Activated CD4-positive, alpha-beta T cell treated with anti-CD3 and anti-CD28 coated beads for 36 hours (primary cell): ENCODE measurements at regions of chr14 and their contacts with region 1.

Region 1: GRCh38 chr14:106872611-106873446 is 1346.4 kb downstream of the TMEM121 start:
- DNase-seq: peak; percentile 95
- ATAC-seq: peak; percentile 89
- H3K4me3 Mint-ChIP-seq: peak overlapping the region; percentile 16
- H3K27ac Mint-ChIP-seq: peak overlapping the region; percentile 63
- H3K4me1 Mint-ChIP-seq: peaks cover 21% of the 10 kb centered on the region
- H3K27me3 Mint-ChIP-seq: peaks cover 20% of the 10 kb centered on the region

Region 2: GRCh38 chr14:105773995-105774394 is 1098.8 kb before region 1 on chr14:
- CTCF ChIA-PET with region 1: no interaction called
- POLR2A ChIA-PET with region 1: no interaction called
- intact Hi-C with region 1: no loop called
- DNase-seq: no peak
- ATAC-seq: no peak
- H3K4me3 Mint-ChIP-seq: no peak overlapping the region
- H3K27ac Mint-ChIP-seq: no peak overlapping the region
- H3K4me1 Mint-ChIP-seq: peaks cover 5% of the 10 kb centered on the region
- H3K27me3 Mint-ChIP-seq: peaks cover 3% of the 10 kb centered on the region

Region 3: GRCh38 chr14:105974902-105975301 is 897.9 kb before region 1 on chr14:
- CTCF ChIA-PET with region 1: no interaction called
- POLR2A ChIA-PET with region 1: no interaction called
- intact Hi-C with region 1: no loop called
- DNase-seq: peak; percentile 81
- ATAC-seq: peak; percentile 96
- H3K4me3 Mint-ChIP-seq: no peak overlapping the region
- H3K27ac Mint-ChIP-seq: no peak overlapping the region
- H3K4me1 Mint-ChIP-seq: peaks cover 3% of the 10 kb centered on the region
- H3K27me3 Mint-ChIP-seq: no peaks in the 10 kb centered on the region

Region 4: DNA sequence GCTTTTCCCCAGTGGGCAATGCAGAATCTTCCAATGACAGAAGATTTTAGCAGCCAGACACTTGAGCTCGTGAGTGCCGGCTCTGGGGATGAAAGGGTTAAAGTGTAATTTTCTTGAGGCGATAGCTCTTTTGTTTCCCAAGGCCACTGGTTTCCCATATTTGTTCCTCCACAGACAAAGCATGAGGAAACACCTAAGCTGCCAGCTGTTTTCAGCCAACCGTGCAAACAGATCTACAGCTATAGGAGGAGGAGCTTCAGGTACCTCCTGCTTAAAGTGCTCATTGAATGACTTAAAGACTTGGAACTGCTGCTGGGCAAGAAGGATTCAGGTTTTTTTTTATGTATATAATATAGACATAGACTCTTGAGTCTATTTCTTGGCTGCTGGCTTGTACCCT is 35.0 kb before region 1 on chr14:
- CTCF ChIA-PET with region 1: interaction called, 82 read pairs
- POLR2A ChIA-PET with region 1: no interaction called
- intact Hi-C with region 1: no loop called
- DNase-seq: no peak
- ATAC-seq: no peak
- H3K4me3 Mint-ChIP-seq: no peak overlapping the region
- H3K27ac Mint-ChIP-seq: no peak overlapping the region
- H3K4me1 Mint-ChIP-seq: peaks cover 5% of the 10 kb centered on the region
- H3K27me3 Mint-ChIP-seq: no peaks in the 10 kb centered on the region

Region 5: GRCh38 chr14:106844608-106845285 is 28.1 kb before region 1 on chr14:
- CTCF ChIA-PET with region 1: interaction called, 30 read pairs
- POLR2A ChIA-PET with region 1: no interaction called
- intact Hi-C with region 1: loop called (anchors 1 to 2 kb)
- DNase-seq: peak; percentile 74
- ATAC-seq: peak; percentile 68
- H3K4me3 Mint-ChIP-seq: peak overlapping the region; percentile 81
- H3K27ac Mint-ChIP-seq: peak overlapping the region; percentile 85
- H3K4me1 Mint-ChIP-seq: peaks cover 37% of the 10 kb centered on the region
- H3K27me3 Mint-ChIP-seq: no peaks in the 10 kb centered on the region

Region 6: GRCh38 chr14:106883218-106883692 is 10.4 kb after region 1 on chr14:
- CTCF ChIA-PET with region 1: interaction called, 28 read pairs
- POLR2A ChIA-PET with region 1: no interaction called
- intact Hi-C with region 1: no loop called
- DNase-seq: peak; percentile 83
- ATAC-seq: peak; percentile 75
- H3K4me3 Mint-ChIP-seq: no peak overlapping the region
- H3K27ac Mint-ChIP-seq: no peak overlapping the region
- H3K4me1 Mint-ChIP-seq: no peaks in the 10 kb centered on the region
- H3K27me3 Mint-ChIP-seq: peaks cover 4% of the 10 kb centered on the region